CD4-positive, alpha-beta T cell (primary cell): ENCODE measurements at regions of chr1 and their contacts with region 1.

Region 1: GRCh38 chr1:172180501-172181285 is 239.8 kb upstream of the C1orf105 start:
- DNase-seq: peak in 12 of 14 experiments; percentile 11 to 79 (median 30)
- ATAC-seq: peak; percentile 65
- H3K4me3 ChIP-seq: peak overlapping the region; percentile 41
- H3K4me3 Mint-ChIP-seq: peak overlapping the region; percentile 83
- H3K27ac ChIP-seq: peak overlapping the region; percentile 71 to 89
- H3K27ac Mint-ChIP-seq: peak overlapping the region; percentile 97
- H3K4me1 ChIP-seq: peaks cover 11% of the 10 kb centered on the region
- H3K4me1 Mint-ChIP-seq: peaks cover 49% of the 10 kb centered on the region
- H3K27me3 ChIP-seq: no peaks in the 10 kb centered on the region
- H3K27me3 Mint-ChIP-seq: no peaks in the 10 kb centered on the region
- CTCF ChIP-seq: no peak

Region 2: GRCh38 chr1:172002725-172003345 is 177.9 kb before region 1 on chr1:
- CTCF ChIA-PET with region 1: no interaction called
- POLR2A ChIA-PET with region 1: no interaction called
- intact Hi-C with region 1: loop called in 1 of 2 experiments (anchors 10 kb)
- DNase-seq: peak in 8 of 14 experiments; percentile 3 to 65 (median 34)
- ATAC-seq: no peak
- H3K4me3 ChIP-seq: no peak overlapping the region
- H3K4me3 Mint-ChIP-seq: no peak overlapping the region
- H3K27ac ChIP-seq: no peak overlapping the region
- H3K27ac Mint-ChIP-seq: no peak overlapping the region
- H3K4me1 ChIP-seq: no peaks in the 10 kb centered on the region
- H3K4me1 Mint-ChIP-seq: no peaks in the 10 kb centered on the region
- H3K27me3 ChIP-seq: no peaks in the 10 kb centered on the region
- H3K27me3 Mint-ChIP-seq: peaks cover under 1% of the 10 kb centered on the region
- CTCF ChIP-seq: peak; percentile 71

Region 3: DNA sequence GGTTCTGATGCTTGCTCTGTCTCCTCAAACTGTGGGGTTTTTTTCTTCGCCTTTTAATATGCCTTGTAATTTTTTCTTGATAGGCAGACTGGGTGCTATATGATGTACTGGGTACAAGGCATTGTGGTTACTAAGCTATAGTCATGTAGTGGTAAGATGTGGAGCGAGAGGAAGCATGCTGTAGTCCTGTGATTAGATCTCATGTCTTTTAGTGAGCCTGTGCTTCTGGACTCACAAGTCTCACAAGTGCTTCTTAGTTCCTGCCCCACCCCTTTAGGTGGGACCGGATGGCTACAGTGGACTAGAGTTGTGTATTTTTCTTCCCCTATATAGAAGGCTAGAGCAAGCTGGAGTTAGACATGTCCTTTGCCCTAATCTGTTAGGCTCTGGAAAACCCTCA is 160.7 kb before region 1 on chr1:
- CTCF ChIA-PET with region 1: no interaction called
- POLR2A ChIA-PET with region 1: no interaction called
- intact Hi-C with region 1: no loop called
- DNase-seq: no peak
- ATAC-seq: no peak
- H3K4me3 ChIP-seq: no peak overlapping the region
- H3K4me3 Mint-ChIP-seq: no peak overlapping the region
- H3K27ac ChIP-seq: no peak overlapping the region
- H3K27ac Mint-ChIP-seq: no peak overlapping the region
- H3K4me1 ChIP-seq: no peaks in the 10 kb centered on the region
- H3K4me1 Mint-ChIP-seq: no peaks in the 10 kb centered on the region
- H3K27me3 ChIP-seq: peaks cover 0 to 3% of the 10 kb centered on the region in 2 experiments
- H3K27me3 Mint-ChIP-seq: peaks cover 8% of the 10 kb centered on the region
- CTCF ChIP-seq: no peak

Region 4: DNA sequence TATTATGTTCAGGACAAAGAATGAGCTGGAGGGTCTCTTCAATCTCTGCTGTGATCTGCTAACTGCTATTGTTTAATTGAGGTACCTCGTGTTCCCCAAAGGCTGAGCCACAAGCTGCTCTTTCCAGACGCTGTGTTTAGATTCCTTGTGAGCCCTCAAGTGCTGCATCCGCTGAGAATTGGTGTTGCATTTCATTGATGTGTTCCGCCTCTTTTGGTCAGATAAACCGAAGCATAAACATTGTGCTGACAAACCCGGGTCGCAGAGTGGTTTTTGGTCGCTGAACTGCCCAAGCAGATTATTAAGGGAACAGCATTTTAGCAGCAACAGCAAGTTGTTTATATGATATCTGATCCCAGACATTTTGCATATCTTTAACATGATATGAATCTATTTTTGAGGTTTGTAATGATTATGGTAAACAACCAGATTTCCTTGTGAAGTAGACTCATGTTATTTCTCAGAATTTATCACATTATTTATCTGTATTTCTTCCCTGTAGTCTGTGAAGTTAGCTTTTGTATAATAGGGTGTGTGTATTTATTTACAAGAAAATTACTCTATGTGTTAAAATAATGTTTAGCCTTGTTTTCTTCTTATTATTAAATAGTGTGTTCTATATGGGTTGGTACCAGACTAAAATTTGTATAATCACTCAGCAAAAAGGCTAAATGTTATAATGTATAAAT is 22.6 kb after region 1 on chr1:
- CTCF ChIA-PET with region 1: no interaction called
- POLR2A ChIA-PET with region 1: no interaction called
- intact Hi-C with region 1: no loop called
- DNase-seq: peak in 2 of 14 experiments; percentile 8 to 39
- ATAC-seq: no peak
- H3K4me3 ChIP-seq: no peak overlapping the region
- H3K4me3 Mint-ChIP-seq: peak overlapping the region; percentile 66
- H3K27ac ChIP-seq: no peak overlapping the region
- H3K27ac Mint-ChIP-seq: peak overlapping the region; percentile 71
- H3K4me1 ChIP-seq: no peaks in the 10 kb centered on the region
- H3K4me1 Mint-ChIP-seq: peaks cover 8% of the 10 kb centered on the region
- H3K27me3 ChIP-seq: no peaks in the 10 kb centered on the region
- H3K27me3 Mint-ChIP-seq: no peaks in the 10 kb centered on the region
- CTCF ChIP-seq: no peak

Region 5: DNA sequence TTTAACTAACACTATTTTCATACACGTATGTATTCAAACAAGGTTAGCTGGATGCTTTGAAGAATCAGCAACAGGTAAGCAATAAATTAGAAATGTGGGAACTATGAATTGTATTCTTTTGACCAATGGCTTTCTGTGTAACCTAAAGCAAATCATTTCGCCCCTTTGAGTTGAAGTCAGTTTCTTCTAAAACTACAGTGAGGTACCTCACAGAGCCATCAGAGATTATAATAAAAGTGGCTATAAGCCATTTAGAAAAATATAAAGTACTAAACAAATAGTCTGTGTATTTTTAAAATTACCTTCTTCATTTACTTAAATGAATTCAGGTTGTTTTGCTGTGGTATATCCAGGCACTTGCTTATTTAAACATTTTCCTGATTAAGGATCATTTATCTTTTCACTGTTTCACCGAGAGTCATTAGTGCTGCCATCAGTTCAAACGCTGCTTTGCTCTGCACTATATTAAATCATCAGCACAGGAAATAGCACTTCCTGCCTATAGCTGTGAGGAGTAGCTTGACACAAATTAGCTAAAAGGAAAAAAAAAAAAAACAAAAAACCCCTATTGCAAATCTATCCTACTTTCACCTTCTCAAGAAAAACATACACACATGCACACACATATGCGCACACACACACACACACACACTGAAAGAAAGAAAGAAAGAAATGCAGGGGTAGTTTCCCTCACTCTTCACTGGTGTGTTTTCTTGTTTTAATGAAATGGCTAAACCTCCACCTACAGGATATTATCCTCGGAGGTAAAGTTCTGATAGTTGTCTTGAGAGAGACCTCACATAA is 199.9 kb after region 1 on chr1:
- CTCF ChIA-PET with region 1: no interaction called
- POLR2A ChIA-PET with region 1: interaction called, 6 read pairs
- intact Hi-C with region 1: loop called in 1 of 2 experiments (anchors 5 kb)
- DNase-seq: peak in 8 of 14 experiments; percentile 9 to 84 (median 38)
- ATAC-seq: peak; percentile 96
- H3K4me3 ChIP-seq: peak overlapping the region; percentile 19
- H3K4me3 Mint-ChIP-seq: peak overlapping the region; percentile 65
- H3K27ac ChIP-seq: peak overlapping the region; percentile 62 to 77
- H3K27ac Mint-ChIP-seq: peak overlapping the region; percentile 88
- H3K4me1 ChIP-seq: no peaks in the 10 kb centered on the region
- H3K4me1 Mint-ChIP-seq: peaks cover 59% of the 10 kb centered on the region
- H3K27me3 ChIP-seq: no peaks in the 10 kb centered on the region
- H3K27me3 Mint-ChIP-seq: no peaks in the 10 kb centered on the region
- CTCF ChIP-seq: no peak